Gastrocnemius medialis (tissue), 4 donors: ENCODE measurements at regions of chr5 and their contacts with region 1.

Region 1: GRCh38 chr5:136769900-136770684 is 404.7 kb upstream of the TRPC7 start:
- DNase-seq: peak; percentile 15 to 39
- ATAC-seq: peak in 1 of 2 donors; percentile 62
- H3K4me3 ChIP-seq: no peak overlapping the region
- H3K27ac ChIP-seq: no peak overlapping the region
- H3K4me1 ChIP-seq: no peaks in the 10 kb centered on the region
- H3K27me3 ChIP-seq: no peaks in the 10 kb centered on the region
- CTCF ChIP-seq: peak; percentile 35 to 64 (median 50)
- POLR2A ChIP-seq: no peak

Region 2: DNA sequence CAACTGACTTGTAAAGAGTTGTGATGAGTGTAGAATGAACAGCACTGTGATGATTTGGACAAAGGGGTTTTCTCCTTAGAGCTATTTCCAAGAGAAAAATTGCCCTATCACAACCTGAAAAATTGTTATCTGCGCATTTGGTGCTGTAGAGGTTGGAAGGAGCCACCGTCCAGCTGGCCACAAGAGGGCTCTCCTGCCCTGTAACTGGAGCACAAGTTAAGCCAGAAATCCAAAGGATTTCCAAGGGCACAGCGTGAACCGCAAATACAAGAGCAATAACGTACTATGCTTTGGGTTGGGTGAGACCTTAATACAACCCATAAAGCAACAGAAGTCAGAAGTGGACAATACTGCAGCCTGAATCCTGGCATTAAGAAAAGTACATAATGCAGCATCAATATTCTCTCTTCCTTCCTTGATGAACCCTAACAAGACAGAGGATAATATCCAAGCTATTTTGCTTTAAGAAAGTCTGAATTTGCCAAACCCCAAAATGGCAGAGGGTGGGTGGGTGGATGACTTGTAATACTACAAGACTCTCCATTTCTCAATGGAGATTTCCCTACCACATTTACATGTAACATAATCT is 520.3 kb before region 1 on chr5:
- in situ Hi-C with region 1: loop called in 3 of 4 experiments (anchors 10 to 25 kb)
- intact Hi-C with region 1: no loop called
- DNase-seq: peak in 1 of 2 donors; percentile 15
- ATAC-seq: peak in 1 of 2 donors; percentile 66
- H3K4me3 ChIP-seq: no peak overlapping the region
- H3K27ac ChIP-seq: no peak overlapping the region
- H3K4me1 ChIP-seq: no peaks in the 10 kb centered on the region
- H3K27me3 ChIP-seq: no peaks in the 10 kb centered on the region
- CTCF ChIP-seq: peak; percentile 22 to 71 (median 36)
- POLR2A ChIP-seq: no peak

Region 3: GRCh38 chr5:136677217-136677616 is 92.9 kb before region 1 on chr5:
- in situ Hi-C with region 1: no loop called
- intact Hi-C with region 1: no loop called
- DNase-seq: no peak
- ATAC-seq: no peak
- H3K4me3 ChIP-seq: no peak overlapping the region
- H3K27ac ChIP-seq: no peak overlapping the region
- H3K4me1 ChIP-seq: no peaks in the 10 kb centered on the region
- H3K27me3 ChIP-seq: no peaks in the 10 kb centered on the region
- CTCF ChIP-seq: no peak
- POLR2A ChIP-seq: no peak